ENCODE measurements at regions of chr19 and their contacts with region 1.

Region 1: GRCh38 chr19:40576585-40577451 is at the start of gene SHKBP1:
- DNase-seq: peak; percentile 84 to 97 (median 93)
- ATAC-seq: peak; percentile 99
- H3K4me3 ChIP-seq: peak within 1 kb of the TSS; percentile 72 to 94
- H3K4me3 Mint-ChIP-seq: peak within 1 kb of the TSS; percentile 90
- H3K27ac ChIP-seq: peak within 1 kb of the TSS; percentile 61 to 75
- H3K27ac Mint-ChIP-seq: peak within 1 kb of the TSS; percentile 80
- H3K4me1 ChIP-seq: peaks cover 20% of the 10 kb centered on the region
- H3K4me1 Mint-ChIP-seq: peaks cover 21% of the 10 kb centered on the region
- H3K27me3 ChIP-seq: no peaks in the 10 kb centered on the region
- H3K27me3 Mint-ChIP-seq: no peaks in the 10 kb centered on the region
- CTCF ChIP-seq: no peak
- total RNA-seq, gene SHKBP1: 93.8 to 95.3 TPM

Region 2: GRCh38 chr19:40403262-40403984 is 173.4 kb before region 1 on chr19:
- CTCF ChIA-PET with region 1: no interaction called
- POLR2A ChIA-PET with region 1: no interaction called
- intact Hi-C with region 1: loop called in 1 of 2 experiments (anchors 2 kb)
- DNase-seq: peak; percentile 56 to 83 (median 77)
- ATAC-seq: peak; percentile 55
- H3K4me3 ChIP-seq: peak overlapping the region; percentile 70 to 89
- H3K4me3 Mint-ChIP-seq: peak overlapping the region; percentile 95
- H3K27ac ChIP-seq: peak overlapping the region; percentile 56 to 63
- H3K27ac Mint-ChIP-seq: peak overlapping the region; percentile 84
- H3K4me1 ChIP-seq: peaks cover 13% of the 10 kb centered on the region
- H3K4me1 Mint-ChIP-seq: peaks cover 29% of the 10 kb centered on the region
- H3K27me3 ChIP-seq: no peaks in the 10 kb centered on the region
- H3K27me3 Mint-ChIP-seq: no peaks in the 10 kb centered on the region
- CTCF ChIP-seq: no peak

Region 3: GRCh38 chr19:40425450-40426287 is 151.1 kb before region 1 on chr19 and contains the start of gene SERTAD1:
- CTCF ChIA-PET with region 1: no interaction called
- POLR2A ChIA-PET with region 1: no interaction called
- intact Hi-C with region 1: no loop called
- DNase-seq: peak; percentile 100
- ATAC-seq: peak; percentile 93
- H3K4me3 ChIP-seq: peak within 1 kb of the TSS; percentile 72 to 92
- H3K4me3 Mint-ChIP-seq: peak within 1 kb of the TSS; percentile 92
- H3K27ac ChIP-seq: peak within 1 kb of the TSS; percentile 91 to 92
- H3K27ac Mint-ChIP-seq: peak within 1 kb of the TSS; percentile 98
- H3K4me1 ChIP-seq: peaks cover 17% of the 10 kb centered on the region
- H3K4me1 Mint-ChIP-seq: peaks cover 28% of the 10 kb centered on the region
- H3K27me3 ChIP-seq: no peaks in the 10 kb centered on the region
- H3K27me3 Mint-ChIP-seq: no peaks in the 10 kb centered on the region
- CTCF ChIP-seq: peak; percentile 55
- total RNA-seq, gene SERTAD1: 36.7 to 38.7 TPM

Region 4: GRCh38 chr19:40529093-40529954 is 47.5 kb before region 1 on chr19:
- CTCF ChIA-PET with region 1: no interaction called
- POLR2A ChIA-PET with region 1: no interaction called
- intact Hi-C with region 1: loop called (anchors 1 kb)
- DNase-seq: peak; percentile 77 to 94 (median 89)
- ATAC-seq: peak; percentile 90
- H3K4me3 ChIP-seq: peak overlapping the region; percentile 41 to 46
- H3K4me3 Mint-ChIP-seq: peak overlapping the region; percentile 66
- H3K27ac ChIP-seq: no peak overlapping the region
- H3K27ac Mint-ChIP-seq: peak overlapping the region; percentile 33
- H3K4me1 ChIP-seq: peaks cover 13% of the 10 kb centered on the region
- H3K4me1 Mint-ChIP-seq: peaks cover 14% of the 10 kb centered on the region
- H3K27me3 ChIP-seq: peaks cover 5 to 8% of the 10 kb centered on the region in 2 experiments
- H3K27me3 Mint-ChIP-seq: peaks cover 20% of the 10 kb centered on the region
- CTCF ChIP-seq: peak; percentile 92

Region 5: GRCh38 chr19:40560092-40560507 is 16.7 kb before region 1 on chr19:
- CTCF ChIA-PET with region 1: no interaction called
- POLR2A ChIA-PET with region 1: no interaction called
- intact Hi-C with region 1: no loop called
- DNase-seq: no peak
- ATAC-seq: no peak
- H3K4me3 ChIP-seq: no peak overlapping the region
- H3K4me3 Mint-ChIP-seq: no peak overlapping the region
- H3K27ac ChIP-seq: no peak overlapping the region
- H3K27ac Mint-ChIP-seq: no peak overlapping the region
- H3K4me1 ChIP-seq: peaks cover 5% of the 10 kb centered on the region
- H3K4me1 Mint-ChIP-seq: peaks cover 9% of the 10 kb centered on the region
- H3K27me3 ChIP-seq: peaks cover 5 to 7% of the 10 kb centered on the region in 2 experiments
- H3K27me3 Mint-ChIP-seq: peaks cover 37% of the 10 kb centered on the region
- CTCF ChIP-seq: no peak

Region 6: DNA sequence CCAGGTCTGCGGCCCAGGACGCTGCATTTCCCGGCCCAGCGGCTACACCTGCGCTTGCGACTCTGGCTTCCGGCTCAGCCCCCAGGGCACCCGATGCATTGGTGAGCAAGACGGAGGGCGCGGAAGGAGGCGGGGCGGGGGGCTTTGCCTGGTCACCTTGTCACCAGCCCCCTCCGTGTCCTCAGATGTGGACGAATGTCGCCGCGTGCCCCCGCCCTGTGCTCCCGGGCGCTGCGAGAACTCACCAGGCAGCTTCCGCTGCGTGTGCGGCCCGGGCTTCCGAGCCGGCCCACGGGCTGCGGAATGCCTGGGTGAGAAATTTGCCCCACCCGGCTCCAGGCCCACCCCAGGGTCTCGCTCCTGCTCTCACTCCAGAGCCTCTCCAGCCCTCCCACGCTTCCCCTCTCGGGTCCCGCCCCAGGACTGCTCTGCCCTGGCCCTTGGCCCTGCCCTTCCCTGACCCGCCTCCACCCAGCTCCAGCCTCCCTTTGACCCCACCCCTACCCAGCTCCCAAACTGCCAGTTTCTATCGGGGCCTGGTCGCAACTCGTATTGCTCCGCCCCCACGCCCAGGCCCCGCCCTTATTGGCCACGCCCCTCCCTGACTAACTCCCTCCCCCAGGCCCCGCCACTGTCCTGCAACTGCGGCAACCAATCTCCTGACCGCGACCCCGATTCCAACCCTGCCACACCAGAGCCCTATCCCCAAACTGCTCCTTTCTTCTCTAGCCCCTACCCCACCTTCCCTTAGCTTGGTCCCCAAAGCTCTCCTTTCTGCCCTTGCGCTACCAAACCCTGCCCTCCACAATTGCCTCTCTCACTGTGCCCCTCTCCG is 33.0 kb after region 1 on chr19:
- CTCF ChIA-PET with region 1: interaction called, 3 read pairs
- POLR2A ChIA-PET with region 1: no interaction called
- intact Hi-C with region 1: loop called in 1 of 2 experiments (anchors 1 kb)
- DNase-seq: peak; percentile 71 to 90 (median 84)
- ATAC-seq: peak; percentile 35
- H3K4me3 ChIP-seq: peak overlapping the region; percentile 50 to 56
- H3K4me3 Mint-ChIP-seq: peak overlapping the region; percentile 78
- H3K27ac ChIP-seq: peak overlapping the region; percentile 72 to 89
- H3K27ac Mint-ChIP-seq: peak overlapping the region; percentile 94
- H3K4me1 ChIP-seq: peaks cover 44% of the 10 kb centered on the region
- H3K4me1 Mint-ChIP-seq: peaks cover 68% of the 10 kb centered on the region
- H3K27me3 ChIP-seq: no peaks in the 10 kb centered on the region
- H3K27me3 Mint-ChIP-seq: no peaks in the 10 kb centered on the region
- CTCF ChIP-seq: no peak